ENCODE measurements at regions of chr12 and their contacts with region 1.

Region 1: DNA sequence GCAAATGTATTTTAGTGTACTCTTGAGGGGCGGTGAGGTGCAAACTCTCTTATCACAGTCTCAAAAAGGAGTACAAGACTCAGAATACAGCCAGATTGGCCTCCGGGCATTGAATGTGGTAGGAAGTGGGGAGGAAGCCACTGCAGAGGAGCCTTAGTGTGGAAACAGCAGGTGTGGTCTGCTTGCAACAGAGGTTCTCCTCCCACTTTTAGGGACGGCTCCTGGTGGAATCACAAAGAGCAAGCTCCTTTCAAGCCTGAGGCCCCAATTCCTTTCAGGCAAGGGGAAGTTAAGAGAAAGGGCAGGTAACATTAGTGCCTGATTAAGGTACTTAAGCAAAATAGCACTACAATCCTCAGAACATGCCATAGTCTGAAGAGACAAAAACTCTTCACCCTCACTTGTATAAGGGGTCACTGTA is 23.7 kb upstream of the SLC2A3 start:
- DNase-seq: no peak
- H3K4me3 ChIP-seq: no peak overlapping the region
- CTCF ChIP-seq: no peak

Region 2: DNA sequence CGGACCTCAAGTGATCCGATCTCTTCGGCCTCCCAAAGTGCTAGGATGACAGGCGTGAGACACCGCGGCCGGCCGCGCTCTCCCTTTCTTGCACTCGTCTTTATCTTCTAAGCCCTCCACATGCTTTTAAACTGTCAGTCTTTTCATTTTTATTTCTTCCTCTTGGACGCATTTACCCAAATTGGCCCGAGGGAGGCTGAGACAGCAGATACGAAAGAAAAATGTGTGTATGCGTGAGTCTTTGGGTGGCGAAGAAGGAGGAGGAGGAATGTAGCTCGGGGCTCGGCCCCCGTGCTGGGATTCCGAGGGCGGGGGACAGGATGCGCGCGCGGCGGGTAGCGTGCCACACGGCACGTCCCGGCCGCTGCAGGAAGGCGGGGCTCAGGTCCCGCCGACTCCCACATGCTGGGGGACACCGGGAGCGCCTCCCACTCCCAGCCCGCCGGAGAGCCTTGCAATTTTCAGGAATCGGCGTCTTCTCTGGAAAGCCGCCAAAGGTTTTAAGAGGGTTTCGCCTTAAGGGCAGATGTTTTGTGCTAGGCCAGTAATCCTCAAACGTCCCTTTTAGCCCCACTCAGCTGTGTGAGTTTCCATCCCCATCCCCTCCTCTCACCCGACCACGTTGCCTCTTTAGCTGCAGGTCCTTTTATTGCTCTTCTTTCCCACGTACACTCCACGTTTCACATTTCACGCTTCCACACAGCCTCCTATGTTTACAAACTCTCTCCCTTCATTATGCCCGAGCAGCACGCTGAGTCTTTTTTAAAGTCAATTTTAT is 11.0 kb after region 1 on chr12:
- CTCF ChIA-PET with region 1: interaction called, 5 read pairs
- POLR2A ChIA-PET with region 1: interaction called, 10 read pairs
- DNase-seq: peak; percentile 83
- H3K4me3 ChIP-seq: peak overlapping the region; percentile 62
- CTCF ChIP-seq: no peak